ENCODE measurements at regions of chr2 and their contacts with region 1.

Region 1: DNA sequence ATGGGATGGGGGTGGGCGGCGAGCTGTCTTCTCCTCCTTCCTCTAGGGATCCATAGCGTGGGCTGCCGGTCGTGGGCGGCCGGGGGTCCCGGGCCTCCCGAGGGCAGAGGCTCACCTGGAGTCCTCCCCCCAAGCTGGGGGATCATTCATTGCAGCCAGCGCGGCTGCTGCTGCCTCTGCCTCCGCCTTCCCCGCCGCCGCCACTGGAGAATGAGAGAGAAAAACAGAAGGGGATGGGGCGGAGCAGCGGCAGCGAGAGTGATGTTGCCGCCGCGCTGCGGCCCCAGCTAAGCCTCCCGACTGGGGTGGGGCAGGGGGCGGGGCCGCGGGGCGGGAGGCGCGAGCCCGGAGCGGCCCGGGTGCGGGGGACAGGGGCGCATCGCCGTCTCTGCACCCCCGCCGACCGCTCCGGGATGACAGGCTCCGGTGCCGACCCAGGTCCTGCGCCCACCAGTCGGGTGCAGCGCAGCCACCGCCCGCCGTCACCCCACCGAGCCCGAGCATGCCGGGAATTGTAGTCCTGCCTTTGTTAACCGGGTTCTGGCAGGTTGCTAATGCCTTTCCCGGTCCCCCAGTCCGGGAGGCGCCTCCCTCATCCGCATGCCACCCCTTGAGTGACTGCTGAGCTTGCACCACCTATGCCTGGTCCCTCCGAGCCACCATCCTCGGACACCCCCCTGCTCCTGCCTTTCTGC is at the start of gene KIF3C:
- DNase-seq: no peak
- H3K4me3 ChIP-seq: peak within 1 kb of the TSS; percentile 84 to 94 (median 90)
- H3K27ac ChIP-seq: peak within 1 kb of the TSS; percentile 72 to 84 (median 76)
- H3K4me1 ChIP-seq: peaks cover 10 to 54% (median 47%) of the 10 kb centered on the region in 4 donors
- H3K27me3 ChIP-seq: no peaks in the 10 kb centered on the region
- CTCF ChIP-seq: no peak
- EP300 ChIP-seq: no peak
- POLR2A ChIP-seq: no peak
- total RNA-seq, gene KIF3C: 6.6 to 14.3 (median 9.3) TPM

Region 2: GRCh38 chr2:25032094-25032493 is 950.3 kb before region 1 on chr2:
- intact Hi-C with region 1: no loop called
- DNase-seq: no peak
- H3K4me3 ChIP-seq: no peak overlapping the region
- H3K27ac ChIP-seq: no peak overlapping the region
- H3K4me1 ChIP-seq: no peaks in the 10 kb centered on the region
- H3K27me3 ChIP-seq: no peaks in the 10 kb centered on the region
- CTCF ChIP-seq: no peak
- EP300 ChIP-seq: no peak
- POLR2A ChIP-seq: no peak

Region 3: DNA sequence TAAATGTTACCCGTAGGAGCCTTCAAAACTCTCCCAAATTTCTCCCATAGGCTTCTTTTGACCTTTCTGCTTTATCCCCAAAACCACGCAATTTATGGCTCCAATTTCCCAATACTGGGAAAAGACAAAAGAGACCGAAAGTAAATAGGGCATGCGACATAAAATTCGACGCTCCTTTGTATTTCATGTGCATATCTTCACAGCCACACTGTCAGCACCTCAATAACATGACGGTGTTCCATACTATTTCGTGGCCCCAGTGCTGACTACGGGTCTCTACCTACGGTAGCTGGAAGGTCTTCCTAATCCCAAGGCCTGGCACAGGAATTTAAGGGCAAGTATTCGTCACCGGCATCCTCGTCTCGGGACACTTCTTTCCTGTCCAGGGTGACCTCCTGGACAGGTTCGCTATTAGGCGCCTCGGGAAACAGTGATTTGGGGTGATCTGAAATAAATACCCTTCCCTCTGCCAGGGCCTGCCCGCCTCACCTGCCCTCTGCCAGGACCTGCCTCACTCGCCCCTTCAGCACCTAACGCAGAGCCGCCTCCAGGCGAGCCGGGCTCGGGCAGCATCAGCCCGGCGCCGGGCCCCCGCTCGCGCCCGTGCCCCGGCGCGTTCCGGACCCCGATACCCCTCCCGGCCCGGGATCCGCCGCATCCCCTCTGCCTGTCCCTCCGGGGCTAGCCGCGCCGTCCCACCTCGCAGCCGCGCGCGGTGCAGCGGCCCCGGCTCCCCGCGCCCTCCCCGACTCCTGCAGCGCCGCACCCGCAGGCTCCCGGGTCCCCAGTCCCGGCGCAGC is 309.7 kb before region 1 on chr2:
- intact Hi-C with region 1: no loop called
- DNase-seq: no peak
- H3K4me3 ChIP-seq: peak overlapping the region; percentile 77 to 98 (median 94)
- H3K27ac ChIP-seq: peak overlapping the region; percentile 85 to 94 (median 91)
- H3K4me1 ChIP-seq: peaks cover 11 to 22% (median 16%) of the 10 kb centered on the region in 4 donors
- H3K27me3 ChIP-seq: no peaks in the 10 kb centered on the region
- CTCF ChIP-seq: no peak
- EP300 ChIP-seq: no peak
- POLR2A ChIP-seq: no peak

Region 4: DNA sequence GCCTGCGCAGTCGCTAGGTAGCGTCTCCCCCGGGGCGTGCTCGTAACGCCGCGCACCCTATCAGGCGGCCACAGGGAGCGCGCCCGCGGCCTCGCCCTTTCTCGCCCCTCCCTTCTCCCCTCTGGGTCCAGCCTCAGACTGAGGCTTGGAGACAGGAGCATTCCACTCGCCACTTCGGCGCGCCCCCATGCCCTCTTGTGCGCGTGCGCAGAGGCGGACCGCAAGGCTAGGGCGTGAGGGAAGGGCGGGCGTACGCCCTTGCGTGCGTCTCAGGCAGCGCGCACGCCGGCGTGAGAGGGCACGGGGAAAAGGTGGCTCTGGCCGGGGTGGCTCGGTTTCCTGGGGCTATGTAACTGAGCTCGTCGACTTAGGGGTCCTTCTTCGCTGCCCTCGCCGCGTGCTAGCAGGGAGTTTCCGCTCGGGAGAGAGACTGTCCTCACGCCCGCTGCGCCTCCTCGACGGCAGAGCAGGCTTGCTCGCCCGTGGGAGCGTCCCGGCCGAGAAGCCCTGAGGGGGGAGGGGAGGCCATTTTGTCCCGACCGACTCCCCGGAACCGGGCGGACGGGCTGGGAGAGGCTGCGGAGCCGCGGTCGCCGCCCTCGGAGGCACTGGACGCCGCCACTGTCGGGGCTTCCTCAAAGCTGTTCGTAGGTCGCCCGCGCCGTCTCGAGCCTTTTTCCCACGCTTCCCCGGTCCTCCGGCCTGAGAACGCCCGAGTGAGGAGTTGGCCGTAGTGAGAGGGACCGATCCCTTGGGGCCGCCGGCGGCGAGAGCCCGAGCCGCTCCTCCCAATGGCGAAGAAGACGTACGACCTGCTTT is 51.6 kb after region 1 on chr2 and contains the start of gene RAB10:
- intact Hi-C with region 1: loop called (anchors 5 kb)
- DNase-seq: peak; percentile 99
- H3K4me3 ChIP-seq: peak within 1 kb of the TSS; percentile 72 to 93 (median 84)
- H3K27ac ChIP-seq: peak within 1 kb of the TSS; percentile 94 to 99 (median 96)
- H3K4me1 ChIP-seq: peaks cover 17 to 52% (median 41%) of the 10 kb centered on the region in 4 donors
- H3K27me3 ChIP-seq: no peaks in the 10 kb centered on the region
- CTCF ChIP-seq: peak in 1 of 3 experiments; percentile 30
- EP300 ChIP-seq: no peak
- POLR2A ChIP-seq: peak; percentile 96
- total RNA-seq, gene RAB10: 91.0 to 106 (median 98.1) TPM

Measured in esophagus muscularis mucosa (tissue), 4 donors.